Activated naive CD4-positive, alpha-beta T cell treated with anti-CD3 and anti-CD28 coated beads for 36 hours (primary cell): ENCODE measurements at regions of chrX and their contacts with region 1.

Region 1: DNA sequence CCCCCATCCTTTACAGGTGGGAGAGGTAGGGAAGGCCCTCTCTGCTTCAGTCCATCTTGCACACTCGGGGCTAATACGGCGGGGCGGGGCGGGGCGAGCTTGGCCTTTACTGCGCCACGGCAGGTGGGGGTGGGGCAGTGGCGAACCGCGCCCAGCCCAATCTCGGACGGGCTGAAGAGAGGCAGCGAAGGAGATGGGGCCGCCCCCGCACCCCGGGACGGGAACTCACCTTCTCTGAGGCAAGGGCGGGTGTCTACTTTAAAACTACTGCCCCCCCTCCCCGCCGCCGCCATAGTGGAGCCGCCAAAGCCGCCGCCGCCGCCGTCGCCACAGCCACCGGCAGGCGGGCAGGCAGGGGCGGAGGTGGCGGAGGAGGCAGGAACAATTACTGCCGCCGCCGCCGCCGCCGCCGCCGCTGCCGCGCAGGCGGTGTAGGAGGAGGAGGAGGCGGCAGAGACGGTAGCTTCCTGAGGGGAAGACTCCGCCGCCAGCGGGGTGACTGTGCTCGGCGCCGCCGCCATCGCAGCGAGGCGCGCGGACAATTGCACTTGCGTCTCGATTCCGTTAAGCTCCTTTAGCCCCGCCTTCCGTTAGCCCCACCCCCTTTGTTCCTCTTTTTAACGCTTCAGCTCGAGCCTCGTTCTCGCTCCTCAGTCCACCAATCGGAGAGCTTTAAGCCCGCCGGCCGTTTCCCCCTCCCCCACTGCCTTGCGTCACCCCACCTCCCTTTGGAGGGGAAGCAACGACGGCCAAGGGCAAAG is at the start of gene ZMAT1:
- DNase-seq: peak; percentile 96
- H3K4me3 Mint-ChIP-seq: peak within 1 kb of the TSS; percentile 92
- H3K27ac Mint-ChIP-seq: peak within 1 kb of the TSS; percentile 91
- H3K4me1 Mint-ChIP-seq: peaks cover 11% of the 10 kb centered on the region
- H3K27me3 Mint-ChIP-seq: no peaks in the 10 kb centered on the region
- total RNA-seq, gene ZMAT1: 2.7 to 2.8 TPM

Region 2: DNA sequence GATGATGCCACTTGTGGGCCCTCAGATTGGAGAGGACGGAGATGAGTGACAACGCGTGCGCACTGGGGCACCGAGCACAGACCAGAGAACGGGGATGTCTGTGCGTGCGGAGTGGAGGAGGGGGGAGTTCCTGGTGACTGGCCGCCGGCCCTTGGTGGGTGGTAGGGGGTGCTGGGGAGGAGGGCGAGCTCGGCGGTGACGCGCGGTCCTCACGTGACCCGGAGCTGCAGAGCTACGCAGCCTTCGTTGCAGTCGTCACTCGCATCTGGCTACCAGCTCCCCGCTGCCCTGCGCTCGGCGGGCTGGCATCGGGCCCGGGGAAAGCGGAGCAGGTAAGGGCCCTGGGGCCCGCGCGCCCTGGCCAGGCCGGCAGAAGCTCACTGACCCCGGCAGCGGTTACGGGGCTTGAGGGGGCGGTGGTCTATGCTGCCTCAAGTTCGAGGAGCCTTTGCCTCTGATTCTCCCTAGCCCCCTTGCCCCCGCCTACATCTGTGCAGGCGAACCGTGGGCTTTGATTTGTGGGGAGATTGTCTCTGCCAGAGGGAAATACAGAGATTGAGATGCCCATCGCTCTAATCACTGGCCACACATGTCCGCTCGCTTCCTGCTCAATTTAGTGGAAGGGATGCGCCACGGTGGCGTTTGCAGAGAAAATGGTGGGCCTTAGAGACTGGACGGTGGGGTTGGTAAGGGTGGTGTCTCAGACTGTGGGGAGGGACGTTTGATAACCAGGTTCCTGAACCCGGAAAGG is 446.3 kb before region 1 on chrX and contains the start of gene ARMCX4:
- CTCF ChIA-PET with region 1: no interaction called
- intact Hi-C with region 1: loop called (anchors 5 kb)
- DNase-seq: peak; percentile 52
- H3K4me3 Mint-ChIP-seq: peak within 1 kb of the TSS; percentile 76
- H3K27ac Mint-ChIP-seq: peak within 1 kb of the TSS; percentile 63
- H3K4me1 Mint-ChIP-seq: peaks cover 8% of the 10 kb centered on the region
- H3K27me3 Mint-ChIP-seq: no peaks in the 10 kb centered on the region
- total RNA-seq, gene ARMCX4: 5.5 to 6.1 TPM

Region 3: DNA sequence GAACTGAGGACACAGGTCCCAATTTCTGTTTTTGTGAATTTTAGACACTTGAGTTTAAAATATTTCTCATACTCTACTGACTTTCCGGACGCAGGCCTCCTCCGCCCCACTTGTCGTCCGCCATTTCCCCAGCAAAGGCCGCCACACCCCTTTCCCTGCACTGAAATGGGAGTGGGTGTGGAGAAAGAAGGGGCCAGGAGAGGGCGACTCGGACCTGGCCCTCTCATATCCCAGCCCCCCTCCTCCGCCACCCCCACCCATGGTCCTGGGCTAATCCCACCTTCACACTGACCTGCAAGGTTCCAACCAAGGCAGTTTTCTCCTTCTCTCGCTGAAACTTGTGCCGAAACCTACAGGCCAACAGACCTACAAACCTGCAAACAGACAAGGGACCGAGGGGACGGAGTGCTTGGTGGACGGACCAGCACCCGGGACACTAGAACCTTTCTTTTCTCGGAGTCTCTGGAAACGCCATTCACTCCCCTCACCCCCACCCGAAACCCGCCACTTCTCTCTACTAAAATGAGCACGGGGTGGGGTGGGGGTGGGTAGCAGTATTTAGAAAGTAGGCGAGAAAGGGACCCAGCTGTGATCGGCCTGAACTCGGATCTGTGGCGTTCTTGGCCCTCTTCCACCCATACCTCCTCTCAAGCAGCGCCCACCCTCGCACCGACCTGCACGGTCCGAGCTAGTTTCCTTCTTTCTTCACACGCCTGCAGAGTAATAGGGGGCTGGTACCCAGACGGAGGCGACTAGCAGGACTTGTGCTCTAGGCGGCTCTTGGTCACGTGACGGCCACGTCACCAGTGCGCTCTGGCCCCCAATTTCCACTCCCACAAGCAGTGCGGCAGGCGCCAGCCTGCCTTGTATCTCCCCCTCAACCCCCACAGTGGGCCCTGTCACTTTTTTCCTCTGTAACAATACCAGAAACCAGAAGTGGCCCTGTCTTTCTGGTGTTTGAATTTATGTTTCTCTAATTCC is 314.2 kb before region 1 on chrX and contains the start of gene ARMCX6:
- CTCF ChIA-PET with region 1: no interaction called
- intact Hi-C with region 1: loop called (anchors 1 kb)
- DNase-seq: peak; percentile 70
- H3K4me3 Mint-ChIP-seq: peak within 1 kb of the TSS; percentile 85
- H3K27ac Mint-ChIP-seq: peak within 1 kb of the TSS; percentile 88
- H3K4me1 Mint-ChIP-seq: peaks cover 38% of the 10 kb centered on the region
- H3K27me3 Mint-ChIP-seq: no peaks in the 10 kb centered on the region
- total RNA-seq, gene ARMCX6: 30.7 to 31.6 TPM

Region 4: DNA sequence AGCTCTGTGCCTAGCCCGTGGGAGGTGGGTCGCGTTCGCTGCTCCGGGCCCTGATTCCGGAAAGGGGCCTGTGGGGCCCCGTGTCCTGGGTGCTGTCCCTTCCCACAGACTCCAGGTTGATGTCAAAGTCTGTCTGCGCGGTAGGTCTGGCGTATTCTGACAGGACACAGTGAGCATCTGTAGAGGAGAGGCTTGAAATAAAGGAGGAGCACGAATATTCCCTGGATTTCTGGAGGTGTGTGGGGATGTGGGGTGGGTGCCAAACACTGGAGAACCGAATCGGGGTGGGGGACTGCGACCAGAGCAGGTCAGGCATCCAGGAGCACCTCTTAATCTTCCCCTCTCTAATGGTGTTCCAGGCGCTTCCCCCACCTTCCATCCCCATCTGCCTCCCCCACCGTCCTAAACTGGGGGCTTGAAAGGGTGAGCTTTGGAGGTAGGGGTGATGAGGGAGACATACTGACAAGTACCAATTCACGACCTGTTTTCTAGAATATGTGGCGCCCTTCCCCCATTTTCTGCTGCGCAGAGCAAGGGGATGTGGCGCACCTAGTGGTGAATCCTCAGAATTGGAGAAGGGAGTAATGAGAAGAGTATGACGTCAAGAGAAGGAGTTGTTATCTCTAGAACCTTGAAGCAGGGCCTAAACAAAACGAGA is 720.5 kb after region 1 on chrX:
- CTCF ChIA-PET with region 1: no interaction called
- intact Hi-C with region 1: loop called (anchors 5 kb)
- DNase-seq: peak; percentile 70
- H3K4me3 Mint-ChIP-seq: peak overlapping the region; percentile 86
- H3K27ac Mint-ChIP-seq: peak overlapping the region; percentile 81
- H3K4me1 Mint-ChIP-seq: peaks cover 21% of the 10 kb centered on the region
- H3K27me3 Mint-ChIP-seq: no peaks in the 10 kb centered on the region